ENCODE measurements at regions of chr6 and their contacts with region 1.

Region 1: GRCh38 chr6:144582939-144583613 is 297.9 kb downstream of the UTRN start:
- DNase-seq: no peak
- H3K4me3 ChIP-seq: peak overlapping the region; percentile 23
- CTCF ChIP-seq: no peak

Region 2: GRCh38 chr6:144931172-144932035 is 348.3 kb after region 1 on chr6:
- CTCF ChIA-PET with region 1: interaction called, 30 read pairs
- POLR2A ChIA-PET with region 1: no interaction called
- DNase-seq: no peak
- H3K4me3 ChIP-seq: no peak overlapping the region
- CTCF ChIP-seq: peak; percentile 53

Region 3: GRCh38 chr6:145028144-145028818 is 445.2 kb after region 1 on chr6:
- CTCF ChIA-PET with region 1: interaction called, 20 read pairs
- POLR2A ChIA-PET with region 1: no interaction called
- DNase-seq: no peak
- H3K4me3 ChIP-seq: no peak overlapping the region
- CTCF ChIP-seq: peak; percentile 42

Region 4: GRCh38 chr6:145137426-145137825 is 554.4 kb after region 1 on chr6:
- CTCF ChIA-PET with region 1: interaction called, 11 read pairs
- POLR2A ChIA-PET with region 1: no interaction called
- DNase-seq: no peak
- H3K4me3 ChIP-seq: no peak overlapping the region
- CTCF ChIP-seq: no peak

Region 5: GRCh38 chr6:145206247-145206907 is 623.3 kb after region 1 on chr6:
- CTCF ChIA-PET with region 1: interaction called, 50 read pairs
- POLR2A ChIA-PET with region 1: no interaction called
- DNase-seq: peak; percentile 60
- H3K4me3 ChIP-seq: no peak overlapping the region
- CTCF ChIP-seq: no peak

Region 6: DNA sequence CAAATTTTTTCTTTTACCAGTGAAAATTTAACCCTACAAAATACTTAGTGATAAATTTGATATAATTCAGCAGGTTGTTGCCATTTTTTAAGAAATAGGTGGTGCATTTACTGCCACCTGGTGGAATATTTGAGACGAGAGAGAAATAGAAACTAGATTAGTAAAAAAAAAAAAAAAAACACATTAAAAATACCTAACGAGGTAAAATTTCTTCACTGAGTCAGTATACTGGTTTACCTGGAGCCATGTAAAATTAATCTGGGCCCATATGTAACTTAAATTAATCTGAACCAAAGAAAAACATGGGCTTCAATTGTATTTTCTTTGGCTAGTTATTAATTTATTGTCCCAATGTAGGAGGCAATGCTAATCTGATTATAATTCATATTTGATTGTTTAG is 631.5 kb after region 1 on chr6:
- CTCF ChIA-PET with region 1: interaction called, 50 read pairs
- POLR2A ChIA-PET with region 1: no interaction called
- DNase-seq: no peak
- H3K4me3 ChIP-seq: no peak overlapping the region
- CTCF ChIP-seq: peak; percentile 14

Region 7: GRCh38 chr6:145633981-145634627 is 1051.0 kb after region 1 on chr6:
- CTCF ChIA-PET with region 1: interaction called, 33 read pairs
- POLR2A ChIA-PET with region 1: no interaction called
- DNase-seq: peak; percentile 34
- H3K4me3 ChIP-seq: no peak overlapping the region
- CTCF ChIP-seq: peak; percentile 82